Dendritic cell treated with granulocyte-macrophage colony-stimulating factor and Interleukin-4, amounts not matched to agents 40 ng/mL and 50 ng/mL, for 4 days (primary cell): ENCODE measurements at regions of chr9 and their contacts with region 1.

Region 1: DNA sequence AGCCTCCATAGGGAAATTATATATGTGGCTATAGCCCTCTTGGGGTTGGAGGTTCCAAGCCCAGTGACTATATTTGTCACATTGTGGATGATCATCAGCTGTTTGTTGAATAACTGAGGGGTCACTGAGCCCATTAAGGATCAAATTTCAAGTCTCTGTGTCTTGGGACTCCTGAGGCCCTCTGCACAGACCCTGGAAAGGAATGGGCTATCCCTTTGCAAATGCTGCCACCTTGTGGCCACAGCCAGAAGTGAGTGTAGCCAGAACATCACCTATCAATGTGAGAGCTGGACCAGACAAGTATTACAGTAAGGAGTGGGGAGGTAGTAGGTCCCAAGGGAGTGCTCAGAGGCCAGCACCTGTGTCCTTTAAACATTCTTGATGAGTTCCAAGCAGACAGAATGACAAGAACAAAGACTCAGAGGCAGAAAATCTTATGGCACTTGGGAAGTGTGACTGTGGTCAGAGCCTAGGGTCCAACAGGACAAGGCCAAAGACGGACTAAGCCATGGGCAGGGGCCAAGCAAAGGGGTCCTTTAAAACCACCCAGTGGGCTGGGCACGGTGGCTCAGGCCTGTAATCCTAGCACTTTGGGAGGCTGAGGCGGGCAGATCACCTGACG is 8.2 kb downstream of the RPP25L start:
- H3K4me3 Mint-ChIP-seq: no peak overlapping the region
- H3K27ac Mint-ChIP-seq: no peak overlapping the region
- H3K4me1 Mint-ChIP-seq: no peaks in the 10 kb centered on the region
- H3K27me3 Mint-ChIP-seq: peaks cover 26% of the 10 kb centered on the region

Region 2: DNA sequence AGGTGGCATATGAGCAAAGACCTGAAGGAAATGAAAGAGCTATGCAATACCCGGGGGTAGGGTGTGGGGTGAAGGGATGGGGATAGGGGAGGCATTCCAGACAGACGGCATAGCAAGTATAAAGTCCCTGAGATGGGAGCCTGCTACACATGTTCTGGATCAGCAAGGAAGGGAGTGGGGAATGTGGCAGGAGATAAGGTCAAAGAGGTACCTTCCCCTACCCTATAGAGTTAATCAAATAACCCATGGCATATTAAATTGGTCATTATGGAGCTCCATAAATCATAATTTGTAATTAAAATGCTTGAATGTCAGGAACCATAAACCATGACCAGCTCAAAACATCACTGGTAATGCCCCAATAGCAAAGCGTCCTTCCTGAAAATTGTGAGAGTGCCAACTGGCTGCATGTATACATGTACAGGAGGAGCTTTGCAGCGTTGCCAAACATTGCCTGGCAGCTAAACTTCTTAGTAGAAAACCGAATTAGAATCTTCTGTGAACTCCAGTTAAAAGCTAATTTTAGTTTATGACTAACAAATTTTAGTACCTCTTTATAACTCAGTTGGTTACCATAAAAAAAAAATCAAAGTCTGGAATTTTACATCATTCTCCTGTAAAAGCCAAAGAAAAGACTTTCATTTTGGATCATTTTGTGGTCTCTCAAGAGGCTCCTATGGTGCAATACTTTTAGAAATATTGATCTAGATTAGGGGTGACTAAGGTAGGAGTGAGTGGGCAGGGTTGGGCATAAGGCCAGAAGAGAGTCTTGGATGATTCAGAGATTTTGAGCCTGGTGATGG is 140.4 kb before region 1 on chr9:
- intact Hi-C with region 1: no loop called
- H3K4me3 Mint-ChIP-seq: no peak overlapping the region
- H3K27ac Mint-ChIP-seq: no peak overlapping the region
- H3K4me1 Mint-ChIP-seq: peaks cover 17% of the 10 kb centered on the region
- H3K27me3 Mint-ChIP-seq: peaks cover 33% of the 10 kb centered on the region

Region 3: DNA sequence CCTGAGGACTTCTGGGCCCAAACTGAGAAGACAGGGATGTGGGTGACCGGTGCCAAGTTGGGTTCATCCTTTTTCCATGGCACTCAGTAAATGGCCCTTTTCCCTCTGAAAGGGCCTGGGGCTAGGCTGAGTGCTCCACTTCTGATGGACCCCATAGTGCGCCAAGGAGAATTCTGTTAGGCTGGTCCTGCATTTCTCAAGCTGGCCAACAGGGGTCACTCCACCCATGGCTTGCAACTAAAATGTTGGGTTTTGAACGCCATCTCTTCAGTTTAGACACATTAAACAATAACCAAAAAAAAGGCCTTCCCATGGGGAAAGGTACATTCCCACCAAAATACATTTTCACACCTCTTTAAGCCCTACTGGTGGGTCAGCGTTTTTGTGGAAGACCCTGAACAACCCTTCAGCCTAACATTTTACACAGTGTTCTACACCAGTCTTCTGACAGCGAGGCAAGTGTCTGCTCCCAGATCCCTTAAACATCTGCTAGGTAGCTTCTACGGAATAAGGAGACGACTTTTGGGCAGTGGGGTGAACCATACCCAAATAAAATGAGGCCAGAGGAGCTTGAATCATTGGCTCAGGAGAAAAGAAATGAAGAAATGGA is 41.5 kb before region 1 on chr9:
- intact Hi-C with region 1: loop called (anchors 1 kb)
- H3K4me3 Mint-ChIP-seq: no peak overlapping the region
- H3K27ac Mint-ChIP-seq: no peak overlapping the region
- H3K4me1 Mint-ChIP-seq: peaks cover 7% of the 10 kb centered on the region
- H3K27me3 Mint-ChIP-seq: peaks cover 61% of the 10 kb centered on the region